ENCODE measurements at regions of chr20 and their contacts with region 1.

Region 1: DNA sequence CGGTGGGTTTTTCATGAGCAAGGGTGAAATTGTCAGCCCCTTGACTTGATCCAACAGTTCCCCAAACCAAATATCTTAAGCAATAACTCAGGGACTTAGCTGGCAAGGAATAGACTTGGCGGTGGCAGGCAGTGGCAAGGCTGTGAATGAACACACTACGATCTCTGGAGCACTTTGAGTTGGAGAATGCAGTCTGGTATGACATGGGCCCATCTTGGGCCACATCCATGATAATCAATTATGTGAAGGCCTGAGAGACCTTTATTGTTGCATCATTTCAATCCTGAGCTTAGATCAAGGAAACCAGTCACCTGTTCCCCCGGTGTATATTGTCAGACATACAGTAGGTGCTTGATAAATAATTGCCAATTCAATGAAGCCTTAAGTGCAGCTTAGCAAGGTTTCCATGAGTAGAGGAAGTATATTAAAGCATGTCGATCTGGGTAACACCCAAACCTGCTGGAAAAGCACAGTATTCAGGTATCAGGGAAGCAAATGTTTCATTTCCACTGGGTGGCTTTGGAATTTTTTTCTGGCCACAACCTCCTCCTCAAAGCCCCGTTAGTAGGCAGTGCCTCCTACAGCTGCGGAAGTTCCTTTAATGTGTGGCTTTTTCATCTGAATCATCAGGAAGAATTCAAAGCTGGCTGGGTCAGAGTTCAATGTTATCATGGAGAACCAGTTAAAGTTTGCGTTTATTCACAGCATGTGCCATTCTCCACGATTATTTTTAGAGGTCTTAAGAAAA is 10.2 kb downstream of the CASS4 start:
- DNase-seq: peak; percentile 93
- H3K4me3 ChIP-seq: no peak overlapping the region
- H3K27ac ChIP-seq: no peak overlapping the region
- H3K4me1 ChIP-seq: peaks cover 42% of the 10 kb centered on the region
- H3K27me3 ChIP-seq: peaks cover 22 to 25% of the 10 kb centered on the region in 2 experiments
- CTCF ChIP-seq: no peak
- POLR2A ChIP-seq: peak; percentile 43

Region 2: GRCh38 chr20:56358596-56359211 is 63.5 kb before region 1 on chr20 and contains the start of gene FAM210B:
- CTCF ChIA-PET with region 1: interaction called, 3 read pairs
- POLR2A ChIA-PET with region 1: no interaction called
- dilution Hi-C with region 1: no loop called
- intact Hi-C with region 1: loop called (anchors 2 kb)
- DNase-seq: peak; percentile 81
- H3K4me3 ChIP-seq: peak within 1 kb of the TSS; percentile 62 to 92 (median 73)
- H3K27ac ChIP-seq: peak within 1 kb of the TSS; percentile 59
- H3K4me1 ChIP-seq: peaks cover 6% of the 10 kb centered on the region
- H3K27me3 ChIP-seq: peaks cover 3 to 4% of the 10 kb centered on the region in 2 experiments
- CTCF ChIP-seq: no peak
- POLR2A ChIP-seq: no peak
- total RNA-seq, gene FAM210B: 37.6 and 44.5 TPM in 2 replicates

Region 3: GRCh38 chr20:56392282-56393137 is 29.7 kb before region 1 on chr20 and contains the start of gene CSTF1:
- CTCF ChIA-PET with region 1: interaction called, 5 read pairs
- POLR2A ChIA-PET with region 1: no interaction called
- dilution Hi-C with region 1: no loop called
- intact Hi-C with region 1: loop called (anchors 1 kb)
- DNase-seq: peak; percentile 100
- H3K4me3 ChIP-seq: peak within 1 kb of the TSS; percentile 52 to 79 (median 78)
- H3K27ac ChIP-seq: peak within 1 kb of the TSS; percentile 50
- H3K4me1 ChIP-seq: peaks cover 14% of the 10 kb centered on the region
- H3K27me3 ChIP-seq: no peaks in the 10 kb centered on the region
- CTCF ChIP-seq: no peak
- POLR2A ChIP-seq: peak; percentile 51
- total RNA-seq, gene CSTF1: 32.9 and 39.6 TPM in 2 replicates

Region 4: GRCh38 chr20:56400090-56400542 is 22.1 kb before region 1 on chr20:
- CTCF ChIA-PET with region 1: interaction called, 5 read pairs
- POLR2A ChIA-PET with region 1: no interaction called
- dilution Hi-C with region 1: no loop called
- intact Hi-C with region 1: loop called (anchors 2 kb)
- DNase-seq: peak; percentile 74
- H3K4me3 ChIP-seq: no peak overlapping the region
- H3K27ac ChIP-seq: no peak overlapping the region
- H3K4me1 ChIP-seq: no peaks in the 10 kb centered on the region
- H3K27me3 ChIP-seq: no peaks in the 10 kb centered on the region
- CTCF ChIP-seq: peak; percentile 66 to 69
- POLR2A ChIP-seq: no peak

Region 5: DNA sequence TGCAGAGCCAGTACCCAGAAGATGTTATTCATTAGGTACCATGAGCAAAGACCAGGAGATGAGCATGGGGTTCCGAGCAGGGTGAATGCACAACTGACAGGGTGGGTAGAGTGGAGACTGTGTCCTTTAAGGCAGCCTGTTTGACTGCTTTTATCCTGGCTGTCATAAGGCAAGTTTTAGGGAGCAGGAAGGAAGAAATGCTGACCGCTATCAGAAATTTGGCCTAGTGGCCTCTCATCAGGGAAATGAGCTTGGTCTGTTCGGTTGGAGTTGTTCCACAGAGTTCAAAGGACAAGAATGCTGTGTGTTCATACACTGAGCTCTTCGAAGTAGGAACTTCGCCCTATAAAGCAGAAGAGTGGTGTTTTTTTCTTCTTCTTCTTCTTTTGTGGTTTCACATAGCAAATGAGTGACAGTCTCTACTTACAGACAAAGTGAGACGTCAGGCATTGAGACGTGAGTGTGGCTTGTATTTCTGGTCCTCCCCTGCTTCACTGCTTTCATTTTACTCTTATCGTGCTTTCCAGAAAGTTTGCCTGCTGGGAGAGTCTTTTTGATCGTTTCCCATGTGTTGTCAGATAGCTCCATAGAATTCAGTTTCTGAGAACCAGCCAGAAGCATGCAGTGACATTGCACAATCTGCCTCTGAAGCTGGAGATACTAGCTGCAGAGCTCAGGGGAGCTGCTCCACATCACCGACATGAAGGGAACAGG is 10.3 kb before region 1 on chr20 and contains the start of gene CASS4:
- CTCF ChIA-PET with region 1: interaction called, 11 read pairs
- POLR2A ChIA-PET with region 1: no interaction called
- dilution Hi-C with region 1: no loop called
- intact Hi-C with region 1: no loop called
- DNase-seq: peak; percentile 30
- H3K4me3 ChIP-seq: no peak within 1 kb of the TSS
- H3K27ac ChIP-seq: no peak within 1 kb of the TSS
- H3K4me1 ChIP-seq: peaks cover 4% of the 10 kb centered on the region
- H3K27me3 ChIP-seq: no peaks in the 10 kb centered on the region
- CTCF ChIP-seq: no peak
- POLR2A ChIP-seq: no peak
- total RNA-seq, gene CASS4: not detected in 2 replicates

Region 6: DNA sequence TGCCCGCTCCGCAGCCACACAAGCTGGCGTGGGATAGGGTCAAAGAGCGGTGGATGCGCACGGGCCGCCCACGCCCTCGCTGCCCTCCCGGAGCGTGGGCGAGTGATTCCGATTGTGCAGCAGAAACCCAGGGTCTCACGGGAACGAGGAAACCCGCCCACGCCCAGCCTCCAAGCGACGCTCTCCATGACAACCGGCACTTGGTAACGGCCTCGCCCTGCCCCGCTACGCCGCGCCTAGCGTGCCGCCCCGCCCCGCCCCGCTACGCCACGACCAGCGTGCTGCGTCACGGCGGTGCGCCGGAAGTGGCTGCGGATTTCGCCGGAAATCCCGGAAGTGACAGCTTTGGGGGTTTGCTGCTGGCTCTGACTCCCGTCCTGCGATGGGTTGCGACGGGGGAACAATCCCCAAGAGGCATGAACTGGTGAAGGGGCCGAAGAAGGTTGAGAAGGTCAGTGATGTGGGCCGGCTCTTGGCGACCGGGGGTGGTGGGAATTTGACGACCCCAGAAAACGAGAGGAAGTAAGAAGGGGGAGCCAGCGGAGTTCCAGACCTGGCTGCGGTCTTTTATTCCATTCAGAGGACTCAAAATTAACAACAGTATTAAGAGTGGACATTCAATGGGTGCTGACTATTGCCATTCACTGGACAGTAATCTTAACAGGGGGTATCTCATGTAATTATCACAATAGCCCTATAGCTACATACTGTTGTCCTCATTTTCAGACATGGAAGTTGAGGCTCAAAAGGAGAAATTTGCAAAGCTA is 46.2 kb after region 1 on chr20 and contains the start of gene RTF2:
- CTCF ChIA-PET with region 1: no interaction called
- POLR2A ChIA-PET with region 1: no interaction called
- dilution Hi-C with region 1: no loop called
- intact Hi-C with region 1: loop called (anchors 1 kb)
- DNase-seq: peak; percentile 95
- H3K4me3 ChIP-seq: peak within 1 kb of the TSS; percentile 83 to 95 (median 92)
- H3K27ac ChIP-seq: peak within 1 kb of the TSS; percentile 87
- H3K4me1 ChIP-seq: peaks cover 7% of the 10 kb centered on the region
- H3K27me3 ChIP-seq: peaks cover 0 to 3% of the 10 kb centered on the region in 2 experiments
- CTCF ChIP-seq: no peak
- POLR2A ChIP-seq: peak; percentile 78
- total RNA-seq, gene RTF2: 82.2 and 84.7 TPM in 2 replicates

Measured in endothelial cell of umbilical vein (primary cell).